GM12878 (cell line): ENCODE measurements at regions of chr5 and their contacts with region 1.

Region 1: GRCh38 chr5:81851481-81852178 is 100.7 kb upstream of the SSBP2 start:
- DNase-seq: peak; percentile 77
- ATAC-seq: peak; percentile 87
- H3K4me3 ChIP-seq: peak overlapping the region; percentile 55
- H3K27ac ChIP-seq: peak overlapping the region; percentile 87
- H3K4me1 ChIP-seq: peaks cover 26% of the 10 kb centered on the region
- H3K27me3 ChIP-seq: no peaks in the 10 kb centered on the region
- CTCF ChIP-seq: no peak
- EP300 ChIP-seq: peak; percentile 45 to 99; a peak in 3 of 4 replicates
- POLR2A ChIP-seq: peak; percentile 86
- RAD21 ChIP-seq: peak; percentile 31; the same call in 1 of the 2 replicates

Region 2: GRCh38 chr5:81425569-81425968 is 426.1 kb before region 1 on chr5:
- CTCF ChIA-PET with region 1: interaction called, 3 read pairs
- POLR2A ChIA-PET with region 1: no interaction called
- RAD21 ChIA-PET with region 1: interaction called, 3 read pairs
- SMC1A ChIA-PET with region 1: interaction called, 4 read pairs
- in situ Hi-C with region 1: no loop called
- intact Hi-C with region 1: loop called (anchors 5 kb)
- DNase-seq: no peak
- ATAC-seq: peak; percentile 84
- H3K4me3 ChIP-seq: no peak overlapping the region
- H3K27ac ChIP-seq: no peak overlapping the region
- H3K4me1 ChIP-seq: no peaks in the 10 kb centered on the region
- H3K27me3 ChIP-seq: no peaks in the 10 kb centered on the region
- CTCF ChIP-seq: peak; percentile 36 to 55 (median 48); a peak in 4 of 6 replicates
- EP300 ChIP-seq: no peak
- POLR2A ChIP-seq: no peak
- RAD21 ChIP-seq: peak; percentile 60

Region 3: DNA sequence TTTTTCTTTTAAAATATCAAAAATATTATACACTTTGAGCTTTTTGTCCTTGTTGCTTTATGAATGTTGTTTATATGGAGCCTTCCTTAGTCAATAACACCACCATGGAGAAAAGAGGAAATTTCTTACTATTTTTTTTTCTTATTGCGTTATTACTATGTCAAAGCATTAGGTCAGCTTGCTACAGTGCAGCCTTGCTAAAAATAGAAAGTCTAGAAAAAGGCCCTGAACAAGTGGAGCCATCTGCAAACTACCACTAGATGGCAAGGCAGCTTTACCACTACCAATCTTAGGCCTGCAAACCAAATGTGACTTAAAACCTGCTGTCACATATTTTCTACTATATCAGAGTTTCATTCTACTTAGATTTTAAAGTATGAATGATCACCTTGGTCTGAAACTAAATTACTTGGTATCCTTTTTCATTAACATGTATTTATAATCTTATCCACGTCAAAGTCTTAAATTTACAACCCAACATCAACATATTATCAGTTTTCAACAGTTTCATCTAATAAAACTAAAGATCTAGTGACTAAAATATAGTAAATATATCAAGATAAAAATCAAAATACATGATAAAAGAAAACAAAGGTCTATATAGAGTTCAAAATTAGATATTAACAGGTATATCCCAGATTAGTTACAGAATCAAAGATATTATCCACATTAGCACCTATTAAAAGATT is 344.6 kb before region 1 on chr5:
- CTCF ChIA-PET with region 1: interaction called, 9 read pairs
- POLR2A ChIA-PET with region 1: no interaction called
- RAD21 ChIA-PET with region 1: interaction called, 14 read pairs
- SMC1A ChIA-PET with region 1: interaction called, 14 read pairs
- in situ Hi-C with region 1: no loop called
- intact Hi-C with region 1: loop called (anchors 1 kb)
- DNase-seq: peak; percentile 67
- ATAC-seq: peak; percentile 100
- H3K4me3 ChIP-seq: no peak overlapping the region
- H3K27ac ChIP-seq: no peak overlapping the region
- H3K4me1 ChIP-seq: no peaks in the 10 kb centered on the region
- H3K27me3 ChIP-seq: no peaks in the 10 kb centered on the region
- CTCF ChIP-seq: peak; percentile 84 to 91 (median 90); a peak in 5 of 6 replicates
- EP300 ChIP-seq: no peak
- POLR2A ChIP-seq: no peak
- RAD21 ChIP-seq: peak; percentile 92

Region 4: DNA sequence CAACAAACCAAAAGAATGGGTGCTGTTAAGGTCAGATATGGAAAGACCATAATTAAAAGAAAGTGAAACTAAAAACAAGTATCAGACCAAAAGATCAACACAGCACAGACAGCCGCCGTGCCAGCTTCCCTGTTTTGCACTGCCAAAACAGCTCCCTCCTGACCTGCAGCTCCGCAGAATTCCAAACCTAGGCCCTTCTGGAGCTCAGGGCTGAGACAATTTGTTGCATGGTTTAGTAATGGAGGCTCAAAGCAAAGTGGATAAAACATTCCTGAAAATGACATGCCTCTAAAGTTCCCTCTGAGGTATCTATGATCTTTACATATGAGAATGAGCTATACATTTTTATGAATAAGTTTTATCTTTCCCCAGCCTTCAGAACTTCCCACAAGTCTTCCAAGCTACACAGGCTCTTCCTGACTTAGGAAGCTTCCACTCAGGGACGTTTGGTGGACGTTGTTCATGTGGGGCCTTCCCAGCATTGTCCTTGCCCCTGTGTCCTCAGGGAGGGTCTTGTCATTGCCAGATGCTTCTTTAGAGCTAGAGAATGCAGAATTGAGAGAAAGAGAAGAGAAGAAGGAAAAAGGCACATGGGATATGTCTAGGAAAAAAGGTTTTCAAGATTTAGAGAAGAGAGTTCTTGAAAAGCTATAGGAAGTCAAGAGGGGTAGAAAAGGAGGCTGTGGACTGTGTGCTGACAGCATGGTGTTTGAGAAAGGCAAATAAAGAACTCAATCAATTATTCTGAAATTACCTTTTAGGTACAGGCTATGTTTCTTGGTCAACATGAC is 72.3 kb before region 1 on chr5:
- CTCF ChIA-PET with region 1: interaction called, 6 read pairs
- POLR2A ChIA-PET with region 1: interaction called, 12 read pairs
- RAD21 ChIA-PET with region 1: interaction called, 16 read pairs
- SMC1A ChIA-PET with region 1: interaction called, 10 read pairs
- in situ Hi-C with region 1: no loop called
- intact Hi-C with region 1: no loop called
- DNase-seq: peak; percentile 23
- ATAC-seq: peak; percentile 95
- H3K4me3 ChIP-seq: peak overlapping the region; percentile 48
- H3K27ac ChIP-seq: peak overlapping the region; percentile 64
- H3K4me1 ChIP-seq: peaks cover 4% of the 10 kb centered on the region; the same call in 1 of the 2 replicates
- H3K27me3 ChIP-seq: no peaks in the 10 kb centered on the region
- CTCF ChIP-seq: no peak
- EP300 ChIP-seq: no peak
- POLR2A ChIP-seq: peak; percentile 77
- RAD21 ChIP-seq: no peak

Region 5: DNA sequence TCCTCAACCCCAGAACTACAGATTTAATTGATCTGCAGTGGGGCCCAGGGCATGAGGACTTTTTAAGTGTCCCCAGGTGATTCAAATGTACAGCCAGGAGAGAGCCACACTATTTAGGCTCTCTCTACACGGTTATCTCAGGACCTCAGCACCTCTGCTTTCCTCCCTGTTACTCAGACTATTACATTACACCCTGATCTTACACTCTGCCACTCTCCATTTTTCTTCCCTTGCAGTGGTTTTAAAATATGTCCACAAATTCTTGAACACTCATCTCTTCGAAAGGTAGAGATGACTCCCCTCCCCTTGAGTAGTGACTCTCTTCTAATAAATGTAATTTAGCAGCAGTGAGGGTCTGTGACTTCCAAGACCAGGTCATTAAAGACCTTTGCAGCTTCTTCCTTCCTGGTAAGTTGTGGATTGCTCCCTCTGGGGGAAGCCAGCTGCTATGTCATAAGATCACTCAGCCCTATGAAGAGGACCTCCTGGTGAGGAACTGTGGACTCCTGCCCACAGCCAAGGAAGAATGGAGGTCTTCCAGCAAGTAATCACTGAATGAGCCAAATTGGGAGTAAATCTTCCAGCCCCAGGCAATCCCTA is 13.2 kb before region 1 on chr5:
- CTCF ChIA-PET with region 1: interaction called, 35 read pairs
- POLR2A ChIA-PET with region 1: interaction called, 3 read pairs
- RAD21 ChIA-PET with region 1: interaction called, 13 read pairs
- SMC1A ChIA-PET with region 1: interaction called, 25 read pairs
- in situ Hi-C with region 1: no loop called
- intact Hi-C with region 1: no loop called
- DNase-seq: no peak
- ATAC-seq: peak; percentile 92
- H3K4me3 ChIP-seq: no peak overlapping the region
- H3K27ac ChIP-seq: no peak overlapping the region
- H3K4me1 ChIP-seq: no peaks in the 10 kb centered on the region
- H3K27me3 ChIP-seq: no peaks in the 10 kb centered on the region
- CTCF ChIP-seq: peak; percentile 51 to 61 (median 54)
- EP300 ChIP-seq: no peak
- POLR2A ChIP-seq: no peak
- RAD21 ChIP-seq: peak; percentile 74

Region 6: DNA sequence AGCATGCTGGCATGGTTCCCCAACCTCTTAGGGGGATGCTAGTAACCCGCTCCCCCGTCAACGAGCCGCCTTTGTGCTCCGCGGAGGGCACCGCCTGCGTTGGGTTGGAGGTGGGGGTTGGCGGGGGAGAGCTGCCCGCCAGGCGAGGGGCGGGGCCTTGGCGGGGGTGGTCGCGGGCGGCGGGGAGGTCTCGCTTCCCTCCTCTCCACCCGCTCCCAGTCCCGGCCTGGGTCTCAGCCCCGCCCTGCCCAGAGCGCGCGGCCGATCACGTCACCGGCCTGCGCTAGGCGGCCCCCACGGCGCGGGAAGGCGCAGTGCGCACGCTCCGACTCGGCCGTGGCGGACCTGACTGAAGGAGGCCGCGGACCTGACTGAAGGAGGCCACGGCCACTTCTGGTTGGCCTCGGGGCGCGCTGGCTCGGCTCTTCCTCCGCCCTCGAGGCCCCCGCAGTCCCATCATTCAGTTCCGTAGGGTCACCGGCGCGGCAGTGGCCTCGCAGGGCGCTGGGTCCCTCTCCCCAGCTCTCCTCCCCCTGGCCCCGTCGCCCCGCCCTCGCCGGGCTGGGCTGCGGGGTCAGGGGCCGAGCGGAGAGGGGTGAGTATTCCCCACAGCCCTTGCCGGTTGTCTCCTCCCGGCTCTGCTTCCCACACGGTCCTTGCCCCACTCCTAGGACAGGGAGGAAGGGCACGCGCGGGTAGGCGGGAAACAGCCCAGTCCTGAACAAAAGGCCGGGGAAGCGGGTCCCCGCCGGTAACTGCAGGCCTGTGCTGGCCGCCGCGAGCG is 120.3 kb after region 1 on chr5 and contains the start of gene ATG10:
- CTCF ChIA-PET with region 1: interaction called, 3 read pairs
- POLR2A ChIA-PET with region 1: interaction called, 4 read pairs
- RAD21 ChIA-PET with region 1: no interaction called
- SMC1A ChIA-PET with region 1: interaction called, 9 read pairs
- in situ Hi-C with region 1: no loop called
- intact Hi-C with region 1: loop called (anchors 2 kb)
- DNase-seq: peak; percentile 69
- ATAC-seq: peak; percentile 97
- H3K4me3 ChIP-seq: peak within 1 kb of the TSS; percentile 79
- H3K27ac ChIP-seq: peak within 1 kb of the TSS; percentile 90
- H3K4me1 ChIP-seq: no peaks in the 10 kb centered on the region
- H3K27me3 ChIP-seq: no peaks in the 10 kb centered on the region
- CTCF ChIP-seq: no peak
- EP300 ChIP-seq: no peak
- POLR2A ChIP-seq: peak; percentile 98
- RAD21 ChIP-seq: no peak
- polyA plus RNA-seq, gene ATG10: 7.5 to 9.0 TPM